Psoas muscle (tissue), 8 donors: ENCODE measurements at regions of chr7 and their contacts with region 1.

Region 1: DNA sequence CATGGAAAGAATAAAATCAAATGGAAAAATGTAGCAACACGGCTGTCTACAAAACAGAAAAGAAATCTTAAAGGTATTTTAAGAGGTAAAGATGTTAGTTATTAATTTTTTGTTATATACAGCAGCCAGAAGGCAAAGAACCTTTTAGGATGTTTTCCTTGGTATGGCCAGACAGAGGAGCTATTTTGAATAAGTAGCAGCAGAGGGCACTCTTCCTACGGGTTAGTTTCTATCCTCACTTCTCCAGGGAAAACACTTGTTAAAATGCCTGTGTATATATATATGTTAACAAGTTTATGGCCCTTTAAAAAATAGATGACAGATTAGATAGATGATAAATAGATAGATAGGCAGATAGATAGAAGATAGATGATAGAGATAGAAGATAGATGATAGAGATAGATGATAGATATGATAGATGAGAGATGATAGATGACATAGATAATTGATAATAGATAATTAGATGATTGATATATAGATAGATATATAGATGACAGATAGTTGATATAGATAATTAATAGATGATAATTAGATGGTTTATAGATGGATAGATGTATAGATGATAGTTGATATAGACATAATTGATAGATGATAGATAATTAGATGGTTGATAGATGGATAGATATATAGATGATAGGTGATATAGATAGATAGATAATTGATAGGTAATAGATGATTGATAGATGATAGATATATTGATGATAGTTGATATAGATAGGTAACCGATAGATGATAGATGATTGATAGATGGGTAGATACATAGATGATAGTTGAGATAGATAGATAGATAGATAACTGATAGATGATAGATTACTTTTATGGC is 57.8 kb upstream of the WIPF3 start:
- DNase-seq: no peak
- ATAC-seq: peak; percentile 75 to 90 (median 77)
- H3K4me3 ChIP-seq: no peak overlapping the region
- H3K27ac ChIP-seq: no peak overlapping the region
- H3K4me1 ChIP-seq: peaks cover 4% of the 10 kb centered on the region
- H3K27me3 ChIP-seq: no peaks in the 10 kb centered on the region
- CTCF ChIP-seq: peak; percentile 65

Region 2: GRCh38 chr7:29627631-29628030 is 120.9 kb before region 1 on chr7:
- intact Hi-C with region 1: loop called in 1 of 2 experiments (anchors 5 kb)
- DNase-seq: no peak
- ATAC-seq: no peak
- H3K4me3 ChIP-seq: no peak overlapping the region
- H3K27ac ChIP-seq: no peak overlapping the region
- H3K4me1 ChIP-seq: no peaks in the 10 kb centered on the region
- H3K27me3 ChIP-seq: peaks cover 0 to 2% (median 0%) of the 10 kb centered on the region in 3 donors
- CTCF ChIP-seq: no peak

Region 3: GRCh38 chr7:29652556-29652955 is 95.9 kb before region 1 on chr7:
- intact Hi-C with region 1: loop called in 1 of 2 experiments (anchors 10 kb)
- DNase-seq: no peak
- ATAC-seq: no peak
- H3K4me3 ChIP-seq: no peak overlapping the region
- H3K27ac ChIP-seq: no peak overlapping the region
- H3K4me1 ChIP-seq: peaks cover 4% of the 10 kb centered on the region
- H3K27me3 ChIP-seq: no peaks in the 10 kb centered on the region
- CTCF ChIP-seq: no peak

Region 4: DNA sequence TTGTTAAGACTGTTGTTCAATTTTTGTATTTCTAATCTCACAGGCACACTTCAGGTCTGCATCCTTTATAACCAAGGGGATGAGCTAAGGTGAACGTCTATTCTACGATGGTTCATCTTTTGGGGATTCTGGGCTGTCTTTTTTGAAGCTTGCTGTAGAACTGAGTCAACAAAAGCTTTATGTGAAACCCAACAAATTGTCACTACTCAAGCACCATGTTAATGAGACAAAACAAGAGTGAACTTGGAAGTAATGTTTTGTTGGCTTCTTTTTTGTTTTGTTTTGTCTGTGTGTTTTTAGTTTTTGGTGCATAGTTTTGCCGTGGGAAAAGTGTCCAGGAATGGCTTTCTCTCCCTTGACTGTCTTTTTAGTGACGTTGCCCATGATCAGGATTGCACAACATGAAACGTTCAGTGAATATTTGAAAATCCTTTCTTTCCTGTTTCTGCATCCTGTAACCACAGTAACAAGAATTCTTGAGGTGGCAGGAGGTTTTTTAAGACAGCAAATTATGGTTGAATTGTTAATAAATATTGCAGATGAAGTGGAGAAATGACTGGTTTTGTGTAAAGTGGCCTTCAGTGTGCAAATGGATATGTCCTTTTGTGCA is 123.4 kb after region 1 on chr7:
- intact Hi-C with region 1: loop called in 1 of 2 experiments (anchors 5 kb)
- DNase-seq: no peak
- ATAC-seq: no peak
- H3K4me3 ChIP-seq: no peak overlapping the region
- H3K27ac ChIP-seq: peak overlapping the region; percentile 20
- H3K4me1 ChIP-seq: peaks cover 27% of the 10 kb centered on the region
- H3K27me3 ChIP-seq: no peaks in the 10 kb centered on the region
- CTCF ChIP-seq: no peak

Region 5: DNA sequence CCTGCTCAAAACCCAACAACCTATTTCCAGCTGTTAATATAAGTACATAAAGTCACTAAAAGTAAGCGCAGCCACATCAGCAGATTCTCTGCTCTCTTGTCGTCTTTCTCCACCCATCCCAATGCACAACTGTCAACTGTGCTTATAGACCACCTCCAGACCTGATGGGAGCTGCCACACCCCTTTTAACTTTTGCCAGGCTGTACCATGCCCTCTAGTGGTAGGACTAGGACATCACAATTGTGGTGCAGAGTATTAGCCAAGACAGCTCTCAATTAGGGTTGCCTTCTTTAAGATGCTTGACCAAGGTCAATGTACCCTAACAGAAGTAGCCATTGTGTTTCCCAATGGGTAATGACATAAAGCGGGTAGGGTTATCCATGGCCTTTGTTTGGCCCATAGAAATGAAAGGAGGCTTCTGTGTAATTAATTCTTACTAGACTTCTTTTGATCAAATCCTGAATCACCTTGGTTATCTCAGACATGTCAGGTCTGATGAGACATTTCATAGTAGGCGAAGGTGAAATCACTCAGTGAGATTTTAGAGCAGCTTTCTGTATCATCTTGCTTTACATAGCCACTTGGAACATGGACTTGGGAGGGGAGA is 173.0 kb after region 1 on chr7:
- intact Hi-C with region 1: loop called (anchors 2 to 5 kb)
- DNase-seq: no peak
- ATAC-seq: peak; percentile 87 to 95 (median 88)
- H3K4me3 ChIP-seq: no peak overlapping the region
- H3K27ac ChIP-seq: no peak overlapping the region
- H3K4me1 ChIP-seq: no peaks in the 10 kb centered on the region
- H3K27me3 ChIP-seq: no peaks in the 10 kb centered on the region
- CTCF ChIP-seq: peak; percentile 89

Region 6: DNA sequence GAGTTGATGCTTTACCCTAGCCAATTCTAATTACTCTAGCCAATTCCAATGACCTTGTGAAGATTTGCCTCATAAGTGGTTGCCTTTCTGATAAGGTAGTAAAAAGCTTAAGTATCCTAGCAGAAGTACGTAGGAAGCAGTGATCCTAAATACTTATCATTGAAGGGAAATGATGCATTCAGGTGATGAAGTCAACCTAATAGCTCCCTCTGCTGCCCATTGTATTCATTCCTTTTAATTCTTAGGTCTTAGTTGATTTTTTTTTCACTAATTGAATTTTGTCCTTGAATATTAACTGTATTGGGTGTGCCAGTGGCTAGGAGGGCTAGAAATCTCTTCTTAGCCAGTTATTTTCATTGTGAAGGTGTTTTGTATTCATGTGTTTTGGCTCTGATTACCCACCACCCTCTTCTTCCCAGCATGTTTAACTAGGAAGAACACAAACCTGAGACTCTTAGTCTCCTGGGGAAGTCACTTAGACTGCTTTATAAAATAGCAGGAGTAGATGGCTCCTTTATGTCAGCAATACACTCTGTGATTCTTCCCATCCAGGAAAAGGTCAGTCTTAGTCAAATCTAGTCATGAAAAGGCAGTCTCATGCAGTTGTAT is 326.0 kb after region 1 on chr7:
- intact Hi-C with region 1: loop called in 1 of 2 experiments (anchors 10 kb)
- DNase-seq: no peak
- ATAC-seq: no peak
- H3K4me3 ChIP-seq: no peak overlapping the region
- H3K27ac ChIP-seq: no peak overlapping the region
- H3K4me1 ChIP-seq: no peaks in the 10 kb centered on the region
- H3K27me3 ChIP-seq: no peaks in the 10 kb centered on the region
- CTCF ChIP-seq: peak; percentile 33

Region 7: DNA sequence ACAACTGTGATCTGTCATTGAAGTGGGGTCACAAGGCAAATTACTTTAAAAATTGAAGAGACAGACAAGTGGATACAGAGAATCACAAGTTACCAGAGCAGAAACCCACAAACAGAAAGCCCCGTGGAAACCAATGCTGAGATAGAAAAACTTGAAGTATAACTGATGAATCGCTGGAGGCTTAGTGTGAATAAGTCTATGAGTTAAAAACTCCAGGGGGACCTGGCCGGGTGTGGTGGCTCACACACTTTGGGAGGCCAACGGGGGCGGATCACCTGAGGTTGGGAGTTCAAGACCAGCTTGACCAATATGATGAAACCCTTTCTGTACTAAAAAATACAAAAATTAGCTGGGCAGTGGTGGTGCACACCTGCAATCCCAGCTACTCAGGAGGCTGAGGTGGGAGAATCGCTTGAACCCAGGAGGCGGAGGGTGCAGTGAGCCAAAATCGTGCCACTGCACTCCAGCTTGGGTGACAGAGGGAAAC is 466.2 kb after region 1 on chr7:
- intact Hi-C with region 1: no loop called
- DNase-seq: no peak
- ATAC-seq: no peak
- H3K4me3 ChIP-seq: no peak overlapping the region
- H3K27ac ChIP-seq: no peak overlapping the region
- H3K4me1 ChIP-seq: no peaks in the 10 kb centered on the region
- H3K27me3 ChIP-seq: no peaks in the 10 kb centered on the region
- CTCF ChIP-seq: no peak